MCF 10A (cell line): ENCODE measurements at regions of chr4 and their contacts with region 1.

Region 1: DNA sequence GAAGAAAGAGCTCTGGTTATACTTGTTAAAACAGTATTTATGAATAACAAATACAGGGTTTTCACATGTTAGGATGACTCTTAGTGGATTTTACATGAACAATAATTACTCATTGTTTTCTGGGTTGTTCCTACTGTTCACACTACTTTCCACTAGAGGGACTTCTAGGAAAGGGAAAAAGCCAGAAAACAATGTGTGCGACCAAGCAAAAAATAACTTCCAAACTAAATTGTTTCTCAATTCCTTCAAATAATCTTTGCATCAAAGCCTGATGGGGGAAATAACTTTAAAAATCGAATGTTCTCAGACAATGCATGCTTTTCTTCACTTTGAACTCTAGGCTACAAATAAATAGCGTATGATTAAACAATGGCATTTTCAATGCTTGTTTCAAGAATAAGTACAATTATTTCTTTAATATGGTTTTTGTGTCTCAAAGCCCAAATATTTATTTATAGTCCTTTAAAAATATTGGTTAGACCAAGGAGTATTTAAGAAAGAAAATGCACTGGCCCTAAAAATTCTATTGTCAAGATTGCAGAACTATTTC is 72.1 kb upstream of the ETNPPL start:
- DNase-seq: peak; percentile 67
- H3K4me3 Mint-ChIP-seq: no peak overlapping the region
- H3K27ac Mint-ChIP-seq: no peak overlapping the region
- H3K4me1 Mint-ChIP-seq: peaks cover 15% of the 10 kb centered on the region
- H3K27me3 Mint-ChIP-seq: no peaks in the 10 kb centered on the region
- CTCF ChIP-seq: peak; percentile 71

Region 2: GRCh38 chr4:108821351-108821930 is 13.5 kb before region 1 on chr4:
- CTCF ChIA-PET with region 1: interaction called, 11 read pairs
- POLR2A ChIA-PET with region 1: interaction called, 3 read pairs
- intact Hi-C with region 1: no loop called
- DNase-seq: peak; percentile 51
- H3K4me3 Mint-ChIP-seq: no peak overlapping the region
- H3K27ac Mint-ChIP-seq: no peak overlapping the region
- H3K4me1 Mint-ChIP-seq: peaks cover 13% of the 10 kb centered on the region
- H3K27me3 Mint-ChIP-seq: peaks cover 6% of the 10 kb centered on the region
- CTCF ChIP-seq: no peak

Region 3: DNA sequence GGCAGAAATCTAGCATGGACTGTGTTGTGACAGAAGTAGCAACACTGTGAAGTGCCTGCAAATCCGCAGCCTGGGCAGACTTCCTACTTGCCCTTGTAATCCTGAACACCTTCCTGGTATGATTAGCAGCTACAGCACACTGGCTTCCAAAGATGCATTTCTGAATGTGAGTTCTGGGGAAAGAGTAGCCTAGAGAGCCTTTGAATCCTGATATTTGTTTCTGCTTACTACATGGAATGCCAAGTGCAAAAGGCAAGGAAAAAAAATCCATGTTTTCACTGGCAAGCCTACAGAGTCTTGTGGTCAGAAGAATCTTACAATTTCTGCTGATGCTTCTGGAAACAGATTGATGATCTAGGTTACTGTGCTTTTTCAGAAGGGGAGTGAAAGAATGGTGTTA is 243.8 kb after region 1 on chr4:
- CTCF ChIA-PET with region 1: interaction called, 3 read pairs
- POLR2A ChIA-PET with region 1: no interaction called
- intact Hi-C with region 1: loop called (anchors 5 kb)
- DNase-seq: peak; percentile 66
- H3K4me3 Mint-ChIP-seq: peak overlapping the region; percentile 19
- H3K27ac Mint-ChIP-seq: peak overlapping the region; percentile 58
- H3K4me1 Mint-ChIP-seq: peaks cover 15% of the 10 kb centered on the region
- H3K27me3 Mint-ChIP-seq: no peaks in the 10 kb centered on the region
- CTCF ChIP-seq: no peak

Region 4: DNA sequence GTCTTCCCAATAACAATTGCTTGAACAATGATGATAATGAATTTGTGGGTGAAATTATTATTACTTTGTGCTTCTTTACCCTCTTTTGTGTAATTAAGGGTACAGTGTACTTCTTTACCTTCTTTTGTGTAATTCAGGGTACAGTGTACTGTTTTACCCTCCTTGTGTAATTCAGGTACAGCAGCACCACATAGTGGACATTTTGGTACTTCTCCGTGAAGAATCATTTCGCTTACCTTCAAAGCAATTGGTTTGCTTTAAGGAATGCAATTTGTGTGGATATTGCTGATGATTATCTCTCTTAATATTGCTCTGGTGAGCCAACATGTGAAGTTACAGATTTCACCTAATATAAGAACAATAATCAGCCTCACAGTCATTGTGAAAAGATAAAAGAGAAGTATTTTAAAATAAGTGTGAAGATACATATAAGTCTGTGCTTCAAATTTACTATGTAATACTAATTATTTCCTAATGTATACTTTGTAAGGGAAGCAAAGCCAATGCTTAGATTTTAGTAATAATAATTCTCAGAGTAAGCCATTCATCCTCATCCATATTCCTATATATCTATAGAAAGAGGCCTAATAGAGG is 571.5 kb after region 1 on chr4:
- CTCF ChIA-PET with region 1: interaction called, 14 read pairs
- POLR2A ChIA-PET with region 1: no interaction called
- intact Hi-C with region 1: loop called (anchors 1 kb)
- DNase-seq: peak; percentile 68
- H3K4me3 Mint-ChIP-seq: no peak overlapping the region
- H3K27ac Mint-ChIP-seq: no peak overlapping the region
- H3K4me1 Mint-ChIP-seq: peaks cover 13% of the 10 kb centered on the region
- H3K27me3 Mint-ChIP-seq: no peaks in the 10 kb centered on the region
- CTCF ChIP-seq: peak; percentile 71